CD8-positive, alpha-beta T cell (primary cell): ENCODE measurements at regions of chr10 and their contacts with region 1.

Region 1: DNA sequence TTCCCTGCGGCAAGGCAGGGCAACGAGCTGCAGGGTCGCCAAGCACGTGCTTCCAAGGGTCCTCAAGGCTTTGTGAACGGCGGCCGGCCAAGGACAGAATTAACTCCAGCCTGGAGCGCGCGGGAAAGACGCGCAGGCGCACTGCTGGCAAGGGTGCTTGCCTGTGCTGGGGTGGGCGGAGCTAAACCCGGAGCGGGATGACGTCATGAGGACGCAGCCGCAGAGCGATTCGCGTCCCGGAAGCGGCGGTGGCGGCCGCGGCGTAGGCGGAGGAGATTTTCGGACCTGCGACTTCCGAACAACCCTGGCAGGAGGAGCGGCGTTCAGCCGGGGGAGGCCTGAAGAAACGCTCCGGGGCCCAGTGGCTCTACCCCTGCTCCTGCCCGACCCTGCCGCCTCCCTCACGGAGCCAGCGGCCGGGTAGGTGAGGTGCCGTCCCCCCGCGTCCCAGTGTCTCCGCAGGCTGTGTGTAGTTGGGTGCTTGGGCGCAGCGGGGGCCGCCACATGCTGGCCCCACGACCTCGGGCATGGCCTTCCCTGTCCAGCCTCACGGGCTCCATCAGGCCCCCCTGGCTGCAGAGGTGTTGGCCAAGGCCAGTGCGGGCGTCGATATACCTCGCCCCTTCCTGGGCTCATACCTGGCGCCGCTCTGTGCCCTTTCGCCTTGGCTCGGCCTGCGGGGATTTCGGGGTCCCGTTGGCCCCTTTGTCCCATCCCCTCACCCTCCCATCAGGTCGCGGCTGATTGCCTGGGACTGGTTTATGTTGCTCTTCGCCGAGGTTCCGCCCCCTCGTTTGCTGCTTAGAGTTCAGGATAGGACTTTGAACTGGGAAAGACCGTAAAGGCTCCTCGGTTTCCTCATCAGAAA is at the start of gene ZFYVE27:
- DNase-seq: peak; percentile 91 to 98 (median 95)
- ATAC-seq: peak; percentile 91
- H3K4me3 ChIP-seq: peak within 1 kb of the TSS; percentile 80 to 88
- H3K4me3 Mint-ChIP-seq: peak within 1 kb of the TSS; percentile 99
- H3K27ac ChIP-seq: peak within 1 kb of the TSS; percentile 93 to 96
- H3K27ac Mint-ChIP-seq: peak within 1 kb of the TSS; percentile 99
- H3K4me1 ChIP-seq: peaks cover 37% of the 10 kb centered on the region
- H3K4me1 Mint-ChIP-seq: peaks cover 58% of the 10 kb centered on the region
- H3K27me3 ChIP-seq: no peaks in the 10 kb centered on the region
- H3K27me3 Mint-ChIP-seq: no peaks in the 10 kb centered on the region
- CTCF ChIP-seq: no peak
- total RNA-seq, gene ZFYVE27: 63.1 to 72.9 TPM

Region 2: DNA sequence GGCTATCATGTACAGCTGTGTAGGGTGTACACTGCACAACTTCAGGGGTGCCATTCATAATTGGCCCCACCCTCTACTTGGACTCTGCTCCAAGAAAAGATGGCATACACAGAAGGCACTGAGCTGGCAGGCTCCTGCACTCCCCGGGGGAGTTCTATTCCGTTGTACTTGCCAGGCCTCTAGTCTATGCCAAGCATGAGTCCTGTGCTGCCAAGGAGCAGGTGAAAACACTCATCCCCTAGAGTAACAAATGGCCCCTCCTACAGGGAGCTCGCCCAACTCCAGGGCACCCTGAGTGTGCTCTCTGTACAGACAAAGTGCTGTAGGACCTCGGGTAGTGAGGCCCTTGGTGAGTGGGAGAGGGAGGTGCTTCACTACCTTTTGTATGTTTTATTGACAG is 678.6 kb before region 1 on chr10:
- CTCF ChIA-PET with region 1: no interaction called
- POLR2A ChIA-PET with region 1: no interaction called
- intact Hi-C with region 1: no loop called
- DNase-seq: no peak
- ATAC-seq: no peak
- H3K4me3 ChIP-seq: no peak overlapping the region
- H3K4me3 Mint-ChIP-seq: no peak overlapping the region
- H3K27ac ChIP-seq: no peak overlapping the region
- H3K27ac Mint-ChIP-seq: no peak overlapping the region
- H3K4me1 ChIP-seq: no peaks in the 10 kb centered on the region
- H3K4me1 Mint-ChIP-seq: no peaks in the 10 kb centered on the region
- H3K27me3 ChIP-seq: no peaks in the 10 kb centered on the region
- H3K27me3 Mint-ChIP-seq: no peaks in the 10 kb centered on the region
- CTCF ChIP-seq: no peak

Region 3: DNA sequence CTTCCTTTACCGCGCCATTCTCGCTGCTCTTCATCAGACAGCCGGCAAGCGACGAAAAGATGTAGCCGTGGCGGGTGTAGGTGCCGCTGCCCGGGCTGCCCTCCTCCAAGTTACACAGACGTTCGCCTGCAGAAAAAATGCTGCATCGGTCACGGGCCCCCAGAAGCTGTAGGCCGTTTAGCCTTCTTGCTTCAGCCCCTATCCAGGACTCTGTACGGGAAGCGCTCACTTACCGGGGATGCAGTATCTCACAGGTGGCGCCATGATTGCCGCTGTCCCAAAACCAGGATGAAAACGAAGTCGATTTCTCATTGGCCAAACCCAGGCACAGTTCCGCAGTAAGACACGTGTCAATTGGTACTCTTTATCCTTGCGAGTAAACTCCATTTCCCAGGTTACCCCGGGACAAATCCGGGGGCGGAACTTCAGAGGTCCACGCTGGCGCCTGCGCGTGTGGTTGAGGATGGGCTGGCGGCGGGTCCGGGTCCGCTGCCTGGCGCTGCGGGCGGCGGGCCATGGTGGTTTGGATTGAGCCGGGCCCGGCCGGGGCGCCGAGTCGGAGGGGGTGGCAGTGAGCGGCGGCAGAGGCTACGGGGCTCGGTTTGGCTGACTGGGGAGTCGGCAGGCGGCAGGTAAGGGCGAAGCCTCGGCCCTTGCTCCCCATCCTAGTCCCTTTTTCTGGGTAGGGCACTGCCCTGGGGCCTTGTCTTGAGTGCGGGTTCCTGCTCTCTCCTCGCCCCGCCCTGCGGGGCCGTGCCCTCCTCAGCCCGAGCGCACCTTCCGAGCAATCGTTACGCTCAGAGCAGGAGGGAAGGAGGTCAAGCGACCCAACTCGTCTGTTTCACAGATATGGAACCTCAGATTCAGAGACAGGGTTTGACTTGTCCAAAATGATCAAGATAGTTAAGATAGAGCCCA is 291.2 kb before region 1 on chr10 and contains the starts of genes EXOSC1 and ZDHHC16:
- CTCF ChIA-PET with region 1: no interaction called
- POLR2A ChIA-PET with region 1: no interaction called
- intact Hi-C with region 1: loop called (anchors 5 to 10 kb)
- DNase-seq: peak; percentile 73 to 95 (median 89)
- ATAC-seq: peak; percentile 97
- H3K4me3 ChIP-seq: peak within 1 kb of the TSS; percentile 89 to 95
- H3K4me3 Mint-ChIP-seq: peak within 1 kb of the TSS; percentile 99
- H3K27ac ChIP-seq: peak within 1 kb of the TSS; percentile 69 to 75
- H3K27ac Mint-ChIP-seq: peak within 1 kb of the TSS; percentile 94
- H3K4me1 ChIP-seq: peaks cover 24% of the 10 kb centered on the region
- H3K4me1 Mint-ChIP-seq: peaks cover 47% of the 10 kb centered on the region
- H3K27me3 ChIP-seq: no peaks in the 10 kb centered on the region
- H3K27me3 Mint-ChIP-seq: no peaks in the 10 kb centered on the region
- CTCF ChIP-seq: no peak
- total RNA-seq, gene EXOSC1: 30.2 to 30.4 TPM
- total RNA-seq, gene ZDHHC16: 4.7 to 6.2 TPM

Region 4: DNA sequence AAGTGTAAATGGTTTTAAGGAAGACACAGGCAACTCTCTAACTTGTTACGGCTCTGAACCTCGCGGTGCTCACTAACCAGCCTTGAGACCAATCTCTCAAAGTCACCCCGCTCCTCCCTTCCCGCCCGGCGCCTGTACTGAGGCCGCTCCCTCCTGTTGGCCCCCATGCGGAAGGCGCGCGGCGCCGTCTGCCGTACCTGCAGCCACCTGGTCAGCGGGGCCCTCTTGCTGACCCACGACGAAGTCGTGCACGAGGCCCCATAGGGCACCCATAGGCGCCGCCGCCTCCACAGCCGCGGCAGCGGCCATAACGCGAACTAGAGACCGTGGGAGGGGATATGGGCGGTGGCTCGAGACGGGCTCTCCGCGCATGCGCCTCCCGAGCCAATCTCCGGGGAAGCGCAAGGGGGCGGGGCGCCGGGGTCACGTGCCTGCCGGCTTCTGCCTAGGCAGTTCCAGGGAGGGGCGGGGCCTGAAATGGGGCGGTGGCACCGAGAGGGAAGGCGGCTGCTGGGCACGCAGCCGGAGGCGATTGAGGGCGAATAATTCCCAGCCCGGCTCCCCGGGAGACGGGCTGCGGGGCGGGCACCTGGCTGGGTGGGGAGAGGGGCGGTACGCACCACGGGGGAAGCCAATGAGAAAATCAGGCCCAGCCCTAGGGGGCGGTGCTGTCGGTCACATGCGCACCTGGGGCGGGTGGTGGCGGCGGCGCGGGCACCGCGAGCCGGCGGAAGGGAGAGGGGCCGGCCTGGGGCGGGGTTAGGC is 238.9 kb before region 1 on chr10 and contains the start of gene MMS19:
- CTCF ChIA-PET with region 1: no interaction called
- POLR2A ChIA-PET with region 1: no interaction called
- intact Hi-C with region 1: loop called (anchors 1 to 5 kb)
- DNase-seq: peak; percentile 98 to 100 (median 99)
- ATAC-seq: peak; percentile 78
- H3K4me3 ChIP-seq: peak within 1 kb of the TSS; percentile 73 to 76
- H3K4me3 Mint-ChIP-seq: peak within 1 kb of the TSS; percentile 97
- H3K27ac ChIP-seq: peak within 1 kb of the TSS; percentile 73 to 83
- H3K27ac Mint-ChIP-seq: peak within 1 kb of the TSS; percentile 96
- H3K4me1 ChIP-seq: peaks cover 42% of the 10 kb centered on the region
- H3K4me1 Mint-ChIP-seq: peaks cover 42% of the 10 kb centered on the region
- H3K27me3 ChIP-seq: peaks cover 4 to 5% of the 10 kb centered on the region in 2 experiments
- H3K27me3 Mint-ChIP-seq: peaks cover 15% of the 10 kb centered on the region
- CTCF ChIP-seq: no peak
- total RNA-seq, gene MMS19: 48.4 to 49.5 TPM

Region 5: GRCh38 chr10:97676770-97677581 is 60.2 kb before region 1 on chr10:
- CTCF ChIA-PET with region 1: interaction called, 172 read pairs
- POLR2A ChIA-PET with region 1: no interaction called
- intact Hi-C with region 1: no loop called
- DNase-seq: peak in 8 of 9 experiments; percentile 27 to 79 (median 56)
- ATAC-seq: peak; percentile 97
- H3K4me3 ChIP-seq: no peak overlapping the region
- H3K4me3 Mint-ChIP-seq: no peak overlapping the region
- H3K27ac ChIP-seq: no peak overlapping the region
- H3K27ac Mint-ChIP-seq: no peak overlapping the region
- H3K4me1 ChIP-seq: no peaks in the 10 kb centered on the region
- H3K4me1 Mint-ChIP-seq: no peaks in the 10 kb centered on the region
- H3K27me3 ChIP-seq: no peaks in the 10 kb centered on the region
- H3K27me3 Mint-ChIP-seq: no peaks in the 10 kb centered on the region
- CTCF ChIP-seq: peak; percentile 91

Region 6: GRCh38 chr10:97701438-97702069 is 35.6 kb before region 1 on chr10:
- CTCF ChIA-PET with region 1: interaction called, 224 read pairs
- POLR2A ChIA-PET with region 1: interaction called, 6 read pairs
- intact Hi-C with region 1: no loop called
- DNase-seq: peak in 6 of 9 experiments; percentile 37 to 77 (median 56)
- ATAC-seq: peak; percentile 99
- H3K4me3 ChIP-seq: no peak overlapping the region
- H3K4me3 Mint-ChIP-seq: no peak overlapping the region
- H3K27ac ChIP-seq: no peak overlapping the region
- H3K27ac Mint-ChIP-seq: no peak overlapping the region
- H3K4me1 ChIP-seq: no peaks in the 10 kb centered on the region
- H3K4me1 Mint-ChIP-seq: no peaks in the 10 kb centered on the region
- H3K27me3 ChIP-seq: no peaks in the 10 kb centered on the region
- H3K27me3 Mint-ChIP-seq: peaks cover 11% of the 10 kb centered on the region
- CTCF ChIP-seq: peak; percentile 69

Region 7: DNA sequence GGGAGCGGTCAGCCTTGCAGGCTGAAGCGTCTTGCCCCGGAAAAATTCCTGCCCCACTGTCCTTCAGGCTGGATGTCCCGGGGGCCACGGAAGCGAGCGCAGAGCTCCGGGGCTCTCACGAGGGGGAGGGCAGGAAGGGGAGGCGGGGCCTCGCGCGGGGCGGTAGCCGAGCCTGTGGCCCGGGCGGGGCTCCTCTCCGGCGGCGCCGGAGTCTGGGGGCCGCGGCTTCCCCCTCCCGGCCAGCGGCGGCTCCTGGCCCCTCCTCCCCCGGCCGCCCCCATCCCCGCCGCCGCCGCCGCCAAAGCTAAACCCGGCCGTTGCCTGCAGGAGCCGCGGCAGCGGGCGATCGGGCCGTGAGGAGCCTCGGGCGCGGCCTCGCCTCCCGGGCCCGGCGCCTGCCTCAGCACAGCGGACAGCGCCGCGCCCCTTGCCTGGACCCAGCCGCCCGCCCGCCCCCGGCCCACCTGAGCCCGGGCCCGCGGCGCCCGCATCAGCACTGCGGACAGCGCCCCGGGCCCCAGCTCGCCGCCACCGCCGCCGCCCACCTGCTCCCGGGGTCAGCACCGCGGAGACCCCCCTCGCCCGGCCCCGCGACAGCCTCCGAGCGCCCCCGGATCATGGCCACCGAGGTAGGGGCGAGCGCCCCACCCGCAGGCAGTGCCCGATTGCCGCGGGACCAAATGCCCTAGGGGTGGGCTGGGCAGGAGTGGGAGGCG is 112.7 kb after region 1 on chr10 and contains the start of gene GOLGA7B:
- CTCF ChIA-PET with region 1: interaction called, 4 read pairs
- POLR2A ChIA-PET with region 1: no interaction called
- intact Hi-C with region 1: loop called (anchors 2 kb)
- DNase-seq: peak; percentile 23 to 80 (median 69)
- ATAC-seq: peak; percentile 84
- H3K4me3 ChIP-seq: peak within 1 kb of the TSS; percentile 70 to 87
- H3K4me3 Mint-ChIP-seq: peak within 1 kb of the TSS; percentile 84
- H3K27ac ChIP-seq: peak within 1 kb of the TSS in 1 of 2 experiments; percentile 22
- H3K27ac Mint-ChIP-seq: peak within 1 kb of the TSS; percentile 84
- H3K4me1 ChIP-seq: peaks cover 31% of the 10 kb centered on the region
- H3K4me1 Mint-ChIP-seq: peaks cover 39% of the 10 kb centered on the region
- H3K27me3 ChIP-seq: no peaks in the 10 kb centered on the region
- H3K27me3 Mint-ChIP-seq: no peaks in the 10 kb centered on the region
- CTCF ChIP-seq: no peak
- total RNA-seq, gene GOLGA7B: 3.5 to 5.1 TPM

Region 8: GRCh38 chr10:98134431-98135221 is 397.5 kb after region 1 on chr10 and contains the start of gene R3HCC1L:
- CTCF ChIA-PET with region 1: no interaction called
- POLR2A ChIA-PET with region 1: no interaction called
- intact Hi-C with region 1: loop called (anchors 2 to 5 kb)
- DNase-seq: peak; percentile 87 to 96 (median 93)
- ATAC-seq: peak; percentile 95
- H3K4me3 ChIP-seq: peak within 1 kb of the TSS; percentile 85
- H3K4me3 Mint-ChIP-seq: peak within 1 kb of the TSS; percentile 92
- H3K27ac ChIP-seq: peak within 1 kb of the TSS; percentile 91 to 93
- H3K27ac Mint-ChIP-seq: peak within 1 kb of the TSS; percentile 97
- H3K4me1 ChIP-seq: peaks cover 23% of the 10 kb centered on the region
- H3K4me1 Mint-ChIP-seq: peaks cover 48% of the 10 kb centered on the region
- H3K27me3 ChIP-seq: no peaks in the 10 kb centered on the region
- H3K27me3 Mint-ChIP-seq: no peaks in the 10 kb centered on the region
- CTCF ChIP-seq: no peak
- total RNA-seq, gene R3HCC1L: 13.6 to 13.7 TPM